HepG2 (cell line): ENCODE measurements at regions of chr3 and their contacts with region 1.

Region 1: DNA sequence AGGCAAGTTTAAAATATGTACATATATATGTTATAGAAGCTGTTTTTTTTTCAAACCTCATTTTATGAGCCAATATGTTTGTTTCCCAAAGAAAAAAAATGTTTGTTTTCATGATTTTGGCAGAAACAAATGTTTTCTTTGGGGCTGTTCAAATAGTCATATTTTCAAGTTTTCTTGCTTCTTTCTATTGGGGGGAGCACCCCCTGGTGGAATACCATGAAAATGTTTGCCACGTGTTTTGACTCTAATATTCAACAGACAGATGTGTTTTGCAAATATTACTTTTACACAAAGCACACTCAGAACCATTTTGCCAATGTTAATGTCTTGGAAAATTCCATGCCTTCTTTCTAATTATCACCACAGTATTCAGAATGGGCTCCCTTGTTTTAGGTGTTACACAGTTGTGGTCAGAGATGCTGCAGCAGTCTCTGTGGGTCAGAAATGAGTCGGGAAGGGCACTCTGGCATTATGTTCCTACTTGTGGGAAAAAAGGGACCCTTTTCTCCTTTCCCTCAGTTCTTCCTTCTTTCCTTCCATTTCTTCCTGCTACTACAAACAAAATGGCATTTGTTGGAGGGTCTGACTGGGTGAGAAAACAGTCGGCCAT is 817.0 kb downstream of the TUSC7 start:
- DNase-seq: peak; percentile 4
- ATAC-seq: 0 out of 3 replicates have a peak, but pooled peaks have one; percentile 31
- H3K4me3 ChIP-seq: no peak overlapping the region
- H3K27ac ChIP-seq: no peak overlapping the region
- H3K4me1 ChIP-seq: no peaks in the 10 kb centered on the region
- H3K27me3 ChIP-seq: no peaks in the 10 kb centered on the region
- CTCF ChIP-seq: peak; percentile 33; the same call in 1 of the 2 replicates
- EP300 ChIP-seq: no peak
- POLR2A ChIP-seq: no peak
- RAD21 ChIP-seq: no peak

Region 2: DNA sequence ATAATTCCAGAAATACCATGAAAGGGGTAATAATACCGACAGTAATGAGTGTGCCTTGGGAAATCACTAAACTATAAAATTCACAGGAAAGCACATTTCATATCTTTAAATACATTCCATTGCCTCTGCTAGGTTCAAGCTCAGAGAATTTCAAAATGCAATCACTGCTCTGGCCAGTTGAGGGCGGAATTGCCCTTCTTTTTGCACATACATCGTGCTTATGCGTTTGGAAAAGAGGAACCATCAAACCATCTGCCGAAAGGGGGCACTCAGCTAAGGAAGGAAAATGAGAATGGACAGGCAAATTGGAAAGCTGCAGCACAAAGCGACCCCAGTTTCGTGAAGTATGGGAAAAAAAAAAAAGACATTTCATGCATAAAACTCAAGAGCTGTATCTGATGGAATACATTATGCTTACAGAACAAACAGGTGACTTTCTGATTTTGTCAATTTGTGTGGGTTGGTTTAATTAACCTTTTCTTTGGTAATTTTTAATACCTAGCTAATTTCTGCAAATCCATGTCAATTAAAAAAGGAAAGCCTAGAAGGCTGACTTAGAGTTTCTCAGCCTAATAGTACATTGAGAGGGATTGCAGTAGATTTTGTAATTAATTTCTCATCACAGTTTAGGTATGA is 755.6 kb before region 1 on chr3:
- CTCF ChIA-PET with region 1: interaction called, 13 read pairs
- POLR2A ChIA-PET with region 1: no interaction called
- in situ Hi-C with region 1: no loop called
- intact Hi-C with region 1: no loop called
- DNase-seq: peak; percentile 79
- ATAC-seq: peak; percentile 98
- H3K4me3 ChIP-seq: no peak overlapping the region
- H3K27ac ChIP-seq: no peak overlapping the region
- H3K4me1 ChIP-seq: no peaks in the 10 kb centered on the region
- H3K27me3 ChIP-seq: no peaks in the 10 kb centered on the region
- CTCF ChIP-seq: peak; percentile 93
- EP300 ChIP-seq: no peak
- POLR2A ChIP-seq: no peak
- RAD21 ChIP-seq: peak; percentile 69

Region 3: GRCh38 chr3:117019082-117019713 is 507.4 kb before region 1 on chr3:
- CTCF ChIA-PET with region 1: interaction called, 8 read pairs
- POLR2A ChIA-PET with region 1: no interaction called
- in situ Hi-C with region 1: no loop called
- intact Hi-C with region 1: loop called (anchors 1 kb)
- DNase-seq: peak; percentile 10
- ATAC-seq: peak; percentile 97
- H3K4me3 ChIP-seq: no peak overlapping the region
- H3K27ac ChIP-seq: no peak overlapping the region
- H3K4me1 ChIP-seq: no peaks in the 10 kb centered on the region
- H3K27me3 ChIP-seq: peaks cover 0 to 18% of the 10 kb centered on the region in 2 experiments; a peak in 2 of 5 replicates
- CTCF ChIP-seq: peak; percentile 76
- EP300 ChIP-seq: no peak
- POLR2A ChIP-seq: no peak
- RAD21 ChIP-seq: no peak

Region 4: DNA sequence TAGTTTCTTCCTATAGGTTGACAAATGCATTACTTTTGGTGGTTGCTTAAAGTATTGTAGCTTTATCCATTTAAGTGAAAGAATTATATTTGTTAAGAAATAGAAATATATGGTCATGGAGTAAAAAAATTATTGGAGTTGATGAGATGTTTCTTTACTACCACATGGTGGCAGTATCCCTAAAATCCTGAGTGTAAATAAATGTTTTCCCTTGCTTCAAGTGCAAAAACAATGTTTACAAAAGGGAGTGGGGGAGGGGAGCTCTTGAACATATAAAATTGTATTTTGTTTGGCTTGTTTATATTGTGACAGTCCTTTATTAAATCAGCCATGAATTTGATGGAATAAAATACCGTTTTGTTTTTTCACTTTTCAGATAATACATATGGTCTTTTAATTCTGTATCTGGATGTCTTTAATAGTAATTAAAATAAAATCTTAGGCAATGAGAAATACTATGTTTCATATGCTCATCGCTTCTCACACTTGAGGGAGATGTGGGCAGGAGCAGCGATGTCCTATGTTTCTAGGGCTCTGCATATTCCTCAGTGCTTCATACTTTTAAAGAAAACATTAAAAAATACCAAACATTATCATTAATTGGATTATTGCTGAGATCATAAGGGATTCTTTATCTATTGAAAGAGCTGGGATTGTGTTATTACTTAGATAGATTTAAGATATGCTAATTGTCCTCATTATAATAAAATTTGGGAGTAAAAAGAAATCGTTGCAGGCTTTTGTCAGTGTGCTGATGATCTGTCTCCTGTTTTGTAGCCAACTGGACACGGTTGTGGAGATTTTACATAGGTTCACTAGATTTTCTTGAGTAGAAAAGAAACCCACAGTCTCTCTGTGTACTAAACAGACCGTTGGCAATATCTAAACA is 467.3 kb before region 1 on chr3:
- CTCF ChIA-PET with region 1: interaction called, 4 read pairs
- POLR2A ChIA-PET with region 1: no interaction called
- in situ Hi-C with region 1: no loop called
- intact Hi-C with region 1: loop called (anchors 1 kb)
- DNase-seq: peak; percentile 10
- ATAC-seq: no peak
- H3K4me3 ChIP-seq: no peak overlapping the region
- H3K27ac ChIP-seq: no peak overlapping the region
- H3K4me1 ChIP-seq: no peaks in the 10 kb centered on the region
- H3K27me3 ChIP-seq: no peaks in the 10 kb centered on the region
- CTCF ChIP-seq: peak; percentile 38
- EP300 ChIP-seq: no peak
- POLR2A ChIP-seq: no peak
- RAD21 ChIP-seq: no peak

Region 5: DNA sequence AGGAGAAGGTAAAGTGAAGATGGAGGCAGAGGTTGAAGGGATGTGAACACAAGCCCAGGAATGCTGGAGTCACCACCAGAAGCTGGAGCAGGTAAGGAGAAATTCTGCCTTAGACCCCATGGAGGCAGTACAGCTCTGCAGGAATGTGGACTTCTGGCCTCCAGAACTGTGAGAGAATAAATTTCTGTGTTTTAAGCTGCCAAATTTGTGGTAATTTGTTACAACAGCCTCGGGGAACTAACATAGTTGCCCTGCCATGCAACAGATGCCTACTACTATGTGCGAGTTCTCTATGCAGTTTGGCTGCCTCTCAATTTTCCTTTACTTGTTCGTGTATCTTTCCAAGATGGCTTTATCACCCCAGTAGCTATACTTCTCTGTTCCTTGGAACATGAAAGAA is 422.9 kb before region 1 on chr3:
- CTCF ChIA-PET with region 1: no interaction called
- POLR2A ChIA-PET with region 1: no interaction called
- in situ Hi-C with region 1: no loop called
- intact Hi-C with region 1: loop called (anchors 1 kb)
- DNase-seq: no peak
- ATAC-seq: no peak
- H3K4me3 ChIP-seq: no peak overlapping the region
- H3K27ac ChIP-seq: no peak overlapping the region
- H3K4me1 ChIP-seq: no peaks in the 10 kb centered on the region
- H3K27me3 ChIP-seq: no peaks in the 10 kb centered on the region
- CTCF ChIP-seq: peak; percentile 25; the same call in 1 of the 2 replicates
- EP300 ChIP-seq: no peak
- POLR2A ChIP-seq: no peak
- RAD21 ChIP-seq: no peak

Region 6: GRCh38 chr3:117407317-117407716 is 119.3 kb before region 1 on chr3:
- CTCF ChIA-PET with region 1: no interaction called
- POLR2A ChIA-PET with region 1: no interaction called
- in situ Hi-C with region 1: no loop called
- intact Hi-C with region 1: loop called (anchors 1 kb)
- DNase-seq: peak; percentile 5
- ATAC-seq: peak; percentile 74
- H3K4me3 ChIP-seq: no peak overlapping the region
- H3K27ac ChIP-seq: no peak overlapping the region
- H3K4me1 ChIP-seq: no peaks in the 10 kb centered on the region
- H3K27me3 ChIP-seq: no peaks in the 10 kb centered on the region
- CTCF ChIP-seq: no peak
- EP300 ChIP-seq: no peak
- POLR2A ChIP-seq: no peak
- RAD21 ChIP-seq: no peak